Naive thymus-derived CD4-positive, alpha-beta T cell (primary cell): ENCODE measurements at regions of chr10 and their contacts with region 1.

Region 1: DNA sequence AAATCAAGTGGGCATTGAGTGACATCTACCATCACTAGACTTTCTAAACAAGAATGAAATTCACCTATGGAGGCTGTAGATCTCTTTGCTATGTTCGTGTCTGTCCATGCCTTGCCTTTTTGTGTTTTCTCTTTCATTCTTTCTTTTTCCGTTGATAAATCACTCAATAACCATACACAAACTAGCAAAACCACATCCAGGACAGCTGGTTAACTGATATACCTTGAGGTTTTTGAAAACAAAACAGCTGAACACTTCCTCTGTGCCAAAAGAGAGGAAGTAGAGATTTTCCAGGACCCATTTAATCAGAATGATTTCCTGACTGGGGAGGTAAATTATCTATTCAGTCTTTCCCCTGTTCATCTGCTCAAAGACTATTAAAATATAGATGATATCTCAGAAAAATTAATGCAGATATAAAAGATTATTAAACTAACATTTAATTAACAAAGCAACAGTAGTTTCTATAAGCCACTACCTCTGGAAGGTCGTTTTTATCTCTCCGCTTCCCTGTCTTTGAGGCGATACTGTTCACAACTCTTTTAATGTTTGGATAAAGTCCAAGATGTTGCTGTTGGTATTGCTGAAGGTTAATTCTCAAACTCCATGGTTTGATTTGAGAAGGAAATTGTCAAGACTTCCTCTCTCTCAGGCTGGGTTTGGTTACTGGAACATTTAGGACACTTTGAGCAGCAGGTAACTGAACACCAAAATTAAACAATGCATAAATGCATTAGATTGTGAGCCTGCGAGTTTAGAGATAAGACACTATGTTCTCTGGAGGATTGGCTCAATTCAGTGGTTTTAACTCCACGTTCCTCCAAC is 24.4 kb upstream of the C10orf67 start:
- DNase-seq: peak in 7 of 9 donors; percentile 33 to 73 (median 64)
- ATAC-seq: peak; percentile 70
- H3K4me3 ChIP-seq: peak overlapping the region; percentile 20
- H3K4me3 Mint-ChIP-seq: peak overlapping the region; percentile 54 to 89 (median 72)
- H3K27ac ChIP-seq: no peak overlapping the region
- H3K27ac Mint-ChIP-seq: peak overlapping the region; percentile 5 to 75 (median 51)
- H3K4me1 ChIP-seq: peaks cover 28 to 33% of the 10 kb centered on the region in 2 donors
- H3K4me1 Mint-ChIP-seq: peaks cover 33 to 63% (median 53%) of the 10 kb centered on the region in 7 donors
- H3K27me3 ChIP-seq: no peaks in the 10 kb centered on the region
- H3K27me3 Mint-ChIP-seq: no peaks in the 10 kb centered on the region

Region 2: GRCh38 chr10:23331567-23332290 is 37.3 kb before region 1 on chr10:
- CTCF ChIA-PET with region 1: no interaction called
- POLR2A ChIA-PET with region 1: interaction called, 4 read pairs
- intact Hi-C with region 1: loop called (anchors 5 kb)
- DNase-seq: no peak
- ATAC-seq: peak; percentile 38
- H3K4me3 ChIP-seq: no peak overlapping the region
- H3K4me3 Mint-ChIP-seq: no peak overlapping the region
- H3K27ac ChIP-seq: no peak overlapping the region
- H3K27ac Mint-ChIP-seq: peak overlapping the region in 1 of 9 donors; percentile 9
- H3K4me1 ChIP-seq: no peaks in the 10 kb centered on the region
- H3K4me1 Mint-ChIP-seq: peaks cover 0 to 9% (median 0%) of the 10 kb centered on the region in 7 donors
- H3K27me3 ChIP-seq: no peaks in the 10 kb centered on the region
- H3K27me3 Mint-ChIP-seq: peaks cover 0 to under 1% (median 0%) of the 10 kb centered on the region in 5 donors

Region 3: DNA sequence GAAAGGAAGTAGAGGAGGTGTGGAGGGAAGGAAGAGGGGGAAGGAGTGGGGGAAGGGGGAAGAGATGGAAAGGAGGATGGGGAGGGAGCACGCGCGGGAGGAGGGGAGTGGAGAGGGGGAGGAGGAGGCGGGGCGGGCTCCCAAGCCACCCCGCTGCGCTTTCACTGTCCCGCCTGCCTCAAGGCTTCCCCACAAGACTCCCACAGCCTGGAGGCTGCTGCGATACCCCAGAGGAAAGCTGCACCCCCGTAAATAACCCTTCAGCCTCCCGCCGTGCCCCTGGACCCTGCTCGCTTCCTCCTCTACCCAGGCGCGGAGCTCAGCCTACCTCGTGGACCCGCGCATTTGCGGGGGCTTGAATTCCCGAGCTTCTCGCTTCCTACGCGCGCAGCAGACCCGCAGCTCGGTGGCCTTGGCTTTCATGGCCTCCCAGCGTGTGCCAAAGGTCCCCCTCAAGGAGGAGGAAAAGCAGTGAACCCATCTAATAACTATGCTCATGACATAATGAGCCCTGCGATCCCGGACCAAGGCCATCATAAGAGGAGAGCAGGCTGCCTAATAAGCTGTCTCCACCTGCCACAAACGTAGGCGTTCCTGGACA is 24.7 kb before region 1 on chr10 and contains the start of gene C10orf67:
- CTCF ChIA-PET with region 1: no interaction called
- POLR2A ChIA-PET with region 1: interaction called, 3 read pairs
- intact Hi-C with region 1: loop called in 1 of 2 experiments (anchors 1 kb)
- DNase-seq: peak in 4 of 9 donors; percentile 22 to 41 (median 28)
- ATAC-seq: peak; percentile 45
- H3K4me3 ChIP-seq: peak within 1 kb of the TSS; percentile 64
- H3K4me3 Mint-ChIP-seq: peak within 1 kb of the TSS; percentile 84 to 95 (median 92)
- H3K27ac ChIP-seq: peak within 1 kb of the TSS; percentile 27
- H3K27ac Mint-ChIP-seq: peak within 1 kb of the TSS; percentile 41 to 83 (median 81)
- H3K4me1 ChIP-seq: peaks cover 0 to 6% of the 10 kb centered on the region in 2 donors
- H3K4me1 Mint-ChIP-seq: peaks cover 24 to 50% (median 44%) of the 10 kb centered on the region in 7 donors
- H3K27me3 ChIP-seq: no peaks in the 10 kb centered on the region
- H3K27me3 Mint-ChIP-seq: peaks cover 0 to 19% (median 0%) of the 10 kb centered on the region in 5 donors
- total RNA-seq, gene C10orf67: not detected

Region 4: GRCh38 chr10:23413629-23414089 is 44.6 kb after region 1 on chr10:
- CTCF ChIA-PET with region 1: no interaction called
- POLR2A ChIA-PET with region 1: no interaction called
- intact Hi-C with region 1: no loop called
- DNase-seq: no peak
- ATAC-seq: peak; percentile 70
- H3K4me3 ChIP-seq: no peak overlapping the region
- H3K4me3 Mint-ChIP-seq: no peak overlapping the region
- H3K27ac ChIP-seq: no peak overlapping the region
- H3K27ac Mint-ChIP-seq: no peak overlapping the region
- H3K4me1 ChIP-seq: no peaks in the 10 kb centered on the region
- H3K4me1 Mint-ChIP-seq: peaks cover 0 to 8% (median 0%) of the 10 kb centered on the region in 7 donors
- H3K27me3 ChIP-seq: no peaks in the 10 kb centered on the region
- H3K27me3 Mint-ChIP-seq: peaks cover 0 to 11% (median 0%) of the 10 kb centered on the region in 5 donors

Region 5: GRCh38 chr10:23448802-23449570 is 80.0 kb after region 1 on chr10:
- CTCF ChIA-PET with region 1: interaction called, 3 read pairs
- POLR2A ChIA-PET with region 1: interaction called, 3 read pairs
- intact Hi-C with region 1: loop called in 1 of 2 experiments (anchors 1 kb)
- DNase-seq: peak in 7 of 9 donors; percentile 12 to 56 (median 33)
- ATAC-seq: peak; percentile 71
- H3K4me3 ChIP-seq: no peak overlapping the region
- H3K4me3 Mint-ChIP-seq: peak overlapping the region in 5 of 10 donors; percentile 4 to 65 (median 43)
- H3K27ac ChIP-seq: no peak overlapping the region
- H3K27ac Mint-ChIP-seq: peak overlapping the region; percentile 71 to 91 (median 83)
- H3K4me1 ChIP-seq: peaks cover 0 to 6% of the 10 kb centered on the region in 2 donors
- H3K4me1 Mint-ChIP-seq: peaks cover 20 to 43% (median 36%) of the 10 kb centered on the region in 7 donors
- H3K27me3 ChIP-seq: no peaks in the 10 kb centered on the region
- H3K27me3 Mint-ChIP-seq: no peaks in the 10 kb centered on the region

Region 6: GRCh38 chr10:24465891-24466818 is 1097.1 kb after region 1 on chr10:
- CTCF ChIA-PET with region 1: no interaction called
- POLR2A ChIA-PET with region 1: no interaction called
- intact Hi-C with region 1: loop called in 1 of 2 experiments (anchors 10 kb)
- DNase-seq: peak in 1 of 9 donors; percentile 69
- ATAC-seq: peak; percentile 42
- H3K4me3 ChIP-seq: no peak overlapping the region
- H3K4me3 Mint-ChIP-seq: peak overlapping the region in 1 of 10 donors; percentile 66
- H3K27ac ChIP-seq: no peak overlapping the region
- H3K27ac Mint-ChIP-seq: peak overlapping the region in 1 of 9 donors; percentile 83
- H3K4me1 ChIP-seq: no peaks in the 10 kb centered on the region
- H3K4me1 Mint-ChIP-seq: peaks cover 4 to 49% (median 14%) of the 10 kb centered on the region in 7 donors
- H3K27me3 ChIP-seq: no peaks in the 10 kb centered on the region
- H3K27me3 Mint-ChIP-seq: peaks cover 0 to 10% (median 8%) of the 10 kb centered on the region in 5 donors